B cell (primary cell): ENCODE measurements at regions of chr6 and their contacts with region 1.

Region 1: GRCh38 chr6:490251-491037 is 98.9 kb downstream of the IRF4 start:
- DNase-seq: peak; percentile 56
- ATAC-seq: peak; percentile 29
- H3K4me3 ChIP-seq: peak overlapping the region in 1 of 5 experiments; percentile 8
- H3K4me3 Mint-ChIP-seq: peak overlapping the region; percentile 52
- H3K27ac ChIP-seq: peak overlapping the region; percentile 51 to 55
- H3K27ac Mint-ChIP-seq: peak overlapping the region; percentile 89
- H3K4me1 ChIP-seq: peaks cover 47 to 56% of the 10 kb centered on the region in 2 donors
- H3K4me1 Mint-ChIP-seq: peaks cover 58% of the 10 kb centered on the region
- H3K27me3 ChIP-seq: no peaks in the 10 kb centered on the region
- H3K27me3 Mint-ChIP-seq: no peaks in the 10 kb centered on the region
- CTCF ChIP-seq: no peak

Region 2: GRCh38 chr6:391559-392440 is 98.6 kb before region 1 on chr6 and contains the start of gene IRF4:
- CTCF ChIA-PET with region 1: interaction called, 7 read pairs
- POLR2A ChIA-PET with region 1: interaction called, 19 read pairs
- intact Hi-C with region 1: loop called (anchors 5 kb)
- DNase-seq: peak; percentile 90
- ATAC-seq: peak; percentile 70
- H3K4me3 ChIP-seq: peak within 1 kb of the TSS; percentile 63 to 98 (median 93)
- H3K4me3 Mint-ChIP-seq: peak within 1 kb of the TSS; percentile 95
- H3K27ac ChIP-seq: peak within 1 kb of the TSS; percentile 71 to 82
- H3K27ac Mint-ChIP-seq: peak within 1 kb of the TSS; percentile 99
- H3K4me1 ChIP-seq: peaks cover 35 to 43% of the 10 kb centered on the region in 2 donors
- H3K4me1 Mint-ChIP-seq: peaks cover 51% of the 10 kb centered on the region
- H3K27me3 ChIP-seq: no peaks in the 10 kb centered on the region
- H3K27me3 Mint-ChIP-seq: no peaks in the 10 kb centered on the region
- CTCF ChIP-seq: no peak
- total RNA-seq, gene IRF4: 129 and 142 TPM in 2 replicates

Region 3: DNA sequence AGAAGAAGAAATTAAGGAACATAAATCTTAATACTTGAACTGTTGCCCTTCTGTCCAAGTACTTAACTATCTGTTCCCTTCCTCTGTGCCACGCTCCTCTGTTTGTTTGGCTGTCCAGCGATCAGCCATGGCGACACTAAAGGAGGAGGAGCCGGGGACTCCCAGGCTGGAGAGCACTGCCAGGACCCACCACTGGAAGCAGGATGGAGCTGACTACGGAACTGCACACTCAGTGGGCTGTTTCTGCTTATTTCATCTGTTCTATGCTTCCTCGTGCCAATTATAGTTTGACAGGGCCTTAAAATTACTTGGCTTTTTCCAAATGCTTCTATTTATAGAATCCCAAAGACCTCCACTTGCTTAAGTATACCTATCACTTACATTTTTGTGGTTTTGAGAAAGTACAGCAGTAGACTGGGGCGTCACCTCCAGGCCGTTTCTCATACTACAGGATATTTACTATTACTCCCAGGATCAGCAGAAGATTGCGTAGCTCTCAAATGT is 81.8 kb before region 1 on chr6:
- CTCF ChIA-PET with region 1: interaction called, 10 read pairs
- POLR2A ChIA-PET with region 1: interaction called, 3 read pairs
- intact Hi-C with region 1: loop called (anchors 5 kb)
- DNase-seq: peak; percentile 60
- ATAC-seq: no peak
- H3K4me3 ChIP-seq: no peak overlapping the region
- H3K4me3 Mint-ChIP-seq: no peak overlapping the region
- H3K27ac ChIP-seq: peak overlapping the region in 1 of 2 donors; percentile 89
- H3K27ac Mint-ChIP-seq: peak overlapping the region; percentile 81
- H3K4me1 ChIP-seq: peaks cover 17 to 19% of the 10 kb centered on the region in 2 donors
- H3K4me1 Mint-ChIP-seq: peaks cover 44% of the 10 kb centered on the region
- H3K27me3 ChIP-seq: no peaks in the 10 kb centered on the region
- H3K27me3 Mint-ChIP-seq: no peaks in the 10 kb centered on the region
- CTCF ChIP-seq: peak; percentile 74

Region 4: GRCh38 chr6:474453-475185 is 15.8 kb before region 1 on chr6:
- CTCF ChIA-PET with region 1: interaction called, 8 read pairs
- POLR2A ChIA-PET with region 1: no interaction called
- intact Hi-C with region 1: loop called (anchors 1 kb)
- DNase-seq: peak; percentile 69
- ATAC-seq: peak; percentile 71
- H3K4me3 ChIP-seq: peak overlapping the region in 1 of 5 experiments; percentile 11
- H3K4me3 Mint-ChIP-seq: peak overlapping the region; percentile 54
- H3K27ac ChIP-seq: no peak overlapping the region
- H3K27ac Mint-ChIP-seq: no peak overlapping the region
- H3K4me1 ChIP-seq: peaks cover 27 to 35% of the 10 kb centered on the region in 2 donors
- H3K4me1 Mint-ChIP-seq: peaks cover 52% of the 10 kb centered on the region
- H3K27me3 ChIP-seq: no peaks in the 10 kb centered on the region
- H3K27me3 Mint-ChIP-seq: no peaks in the 10 kb centered on the region
- CTCF ChIP-seq: no peak

Region 5: DNA sequence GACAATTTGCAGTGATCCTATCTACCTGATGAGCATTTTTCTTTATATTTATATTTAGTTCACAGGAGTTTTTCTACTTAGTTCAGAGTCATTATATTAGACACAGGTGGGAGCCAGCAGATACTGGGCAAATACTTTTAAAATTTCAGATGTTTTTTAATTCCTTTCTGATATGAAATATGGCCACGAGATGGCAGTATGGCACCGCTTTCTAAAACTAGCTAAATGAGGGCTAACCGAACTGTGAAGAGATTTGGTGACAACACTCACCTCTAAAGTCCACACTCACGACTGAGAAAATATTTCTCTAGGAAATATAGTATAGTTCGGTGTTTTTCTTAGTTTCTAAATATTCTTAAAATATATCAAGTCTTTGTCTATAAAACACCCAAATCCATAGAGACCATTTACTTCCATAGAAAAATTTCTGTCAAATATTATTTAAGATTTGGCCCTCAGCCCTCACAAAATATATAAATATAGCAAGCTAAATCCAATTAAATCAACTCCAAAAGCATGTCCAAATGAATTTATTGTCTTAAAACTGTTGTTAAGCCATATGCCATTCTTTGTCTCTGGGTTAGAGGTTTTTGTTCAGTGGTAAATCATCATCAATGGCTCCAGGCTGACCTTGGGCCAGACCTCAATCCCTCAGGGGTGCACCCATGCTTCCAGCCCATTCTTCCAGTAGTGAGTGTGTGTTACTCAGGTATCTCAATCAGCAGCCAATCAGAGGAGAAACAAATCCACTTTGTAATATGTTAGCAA is 102.9 kb after region 1 on chr6:
- CTCF ChIA-PET with region 1: no interaction called
- POLR2A ChIA-PET with region 1: no interaction called
- intact Hi-C with region 1: no loop called
- DNase-seq: peak; percentile 74
- ATAC-seq: peak; percentile 33
- H3K4me3 ChIP-seq: no peak overlapping the region
- H3K4me3 Mint-ChIP-seq: no peak overlapping the region
- H3K27ac ChIP-seq: no peak overlapping the region
- H3K27ac Mint-ChIP-seq: no peak overlapping the region
- H3K4me1 ChIP-seq: no peaks in the 10 kb centered on the region
- H3K4me1 Mint-ChIP-seq: no peaks in the 10 kb centered on the region
- H3K27me3 ChIP-seq: no peaks in the 10 kb centered on the region
- H3K27me3 Mint-ChIP-seq: no peaks in the 10 kb centered on the region
- CTCF ChIP-seq: peak; percentile 90

Region 6: DNA sequence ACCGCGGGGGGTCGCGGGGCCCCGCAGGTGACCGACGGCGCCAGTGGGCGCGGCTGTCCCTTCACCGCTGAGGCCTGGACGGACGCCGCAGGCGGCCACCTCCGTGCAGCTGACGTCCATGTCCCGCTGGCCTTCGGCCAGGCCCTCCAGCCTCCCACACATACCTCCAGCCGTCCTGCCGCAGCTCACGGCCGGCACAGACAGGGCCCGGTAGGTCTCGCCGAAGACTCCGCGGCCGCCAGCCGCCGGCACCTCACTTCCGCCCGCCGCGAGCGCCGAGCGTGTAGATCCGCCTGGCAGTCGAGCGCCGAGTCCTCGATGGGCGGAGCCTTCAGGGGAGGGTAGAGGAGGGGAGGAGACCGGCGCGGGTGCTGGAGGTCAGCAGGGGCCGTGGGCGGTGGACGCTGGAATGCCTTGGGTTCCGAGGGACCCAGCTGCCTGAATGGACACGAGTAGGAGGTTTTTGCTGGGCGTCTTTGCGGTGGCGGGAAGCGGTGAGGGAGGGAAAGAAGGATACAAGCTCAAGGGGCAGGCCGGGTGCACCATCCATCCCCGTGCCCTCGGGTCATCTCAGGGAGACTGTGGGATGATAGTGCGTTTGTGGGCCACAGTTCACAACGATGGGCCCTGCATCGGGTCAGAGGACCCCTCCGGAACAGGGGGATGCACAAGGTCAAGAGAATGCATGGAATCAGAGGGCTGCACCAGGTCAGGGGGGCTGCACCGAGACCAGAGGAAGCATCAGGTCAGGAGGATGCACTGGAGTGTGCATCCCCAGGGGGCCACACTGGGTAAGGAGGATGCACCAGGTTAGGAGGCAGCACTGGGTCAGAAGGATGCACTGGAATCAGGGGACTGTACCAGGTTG is 202.6 kb after region 1 on chr6 and contains the start of gene EXOC2:
- CTCF ChIA-PET with region 1: no interaction called
- POLR2A ChIA-PET with region 1: no interaction called
- intact Hi-C with region 1: loop called (anchors 1 kb)
- DNase-seq: peak; percentile 87
- ATAC-seq: peak; percentile 86
- H3K4me3 ChIP-seq: peak within 1 kb of the TSS; percentile 45 to 91 (median 86)
- H3K4me3 Mint-ChIP-seq: peak within 1 kb of the TSS; percentile 99
- H3K27ac ChIP-seq: peak within 1 kb of the TSS; percentile 62 to 93
- H3K27ac Mint-ChIP-seq: peak within 1 kb of the TSS; percentile 95
- H3K4me1 ChIP-seq: peaks cover 16 to 17% of the 10 kb centered on the region in 2 donors
- H3K4me1 Mint-ChIP-seq: peaks cover 35% of the 10 kb centered on the region
- H3K27me3 ChIP-seq: no peaks in the 10 kb centered on the region
- H3K27me3 Mint-ChIP-seq: no peaks in the 10 kb centered on the region
- CTCF ChIP-seq: no peak
- total RNA-seq, gene EXOC2: 41.0 and 45.0 TPM in 2 replicates

Region 7: DNA sequence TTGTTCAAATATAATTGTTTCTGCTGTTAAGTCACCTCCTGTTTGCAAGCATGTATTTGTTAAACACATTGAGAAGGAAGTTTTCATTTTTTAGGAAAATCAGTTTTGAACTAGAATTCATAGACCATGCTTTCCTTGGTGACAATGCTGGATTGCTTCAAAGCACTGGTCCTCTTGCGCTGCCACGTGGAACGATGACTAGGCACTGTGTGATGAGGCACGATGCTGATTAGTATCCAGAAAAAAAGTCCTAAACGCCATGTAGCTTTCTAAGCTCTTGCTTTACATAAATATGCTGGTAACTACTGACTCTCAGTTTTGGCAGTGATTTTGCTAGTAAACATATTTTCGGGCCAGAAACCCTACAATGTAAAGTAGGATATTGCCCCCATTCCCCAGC is 213.6 kb after region 1 on chr6:
- CTCF ChIA-PET with region 1: no interaction called
- POLR2A ChIA-PET with region 1: no interaction called
- intact Hi-C with region 1: no loop called
- DNase-seq: no peak
- ATAC-seq: no peak
- H3K4me3 ChIP-seq: no peak overlapping the region
- H3K4me3 Mint-ChIP-seq: no peak overlapping the region
- H3K27ac ChIP-seq: no peak overlapping the region
- H3K27ac Mint-ChIP-seq: no peak overlapping the region
- H3K4me1 ChIP-seq: no peaks in the 10 kb centered on the region
- H3K4me1 Mint-ChIP-seq: no peaks in the 10 kb centered on the region
- H3K27me3 ChIP-seq: no peaks in the 10 kb centered on the region
- H3K27me3 Mint-ChIP-seq: peaks cover 11% of the 10 kb centered on the region
- CTCF ChIP-seq: no peak